Dorsolateral prefrontal cortex (tissue), 120 donors: ENCODE measurements at regions of chr21 and their contacts with region 1.

Region 1: GRCh38 chr21:42925114-42925907 is at the start of gene ERVH48-1:
- DNase-seq: peak in 1 of 10 donors; percentile 12
- H3K4me3 ChIP-seq: no peak within 1 kb of the TSS
- H3K27ac ChIP-seq: peak within 1 kb of the TSS in 9 of 59 donors; percentile 4 to 62 (median 31)
- H3K27me3 ChIP-seq: no peaks in the 10 kb centered on the region
- CTCF ChIP-seq: no peak
- total RNA-seq, gene ERVH48-1: not detected

Region 2: DNA sequence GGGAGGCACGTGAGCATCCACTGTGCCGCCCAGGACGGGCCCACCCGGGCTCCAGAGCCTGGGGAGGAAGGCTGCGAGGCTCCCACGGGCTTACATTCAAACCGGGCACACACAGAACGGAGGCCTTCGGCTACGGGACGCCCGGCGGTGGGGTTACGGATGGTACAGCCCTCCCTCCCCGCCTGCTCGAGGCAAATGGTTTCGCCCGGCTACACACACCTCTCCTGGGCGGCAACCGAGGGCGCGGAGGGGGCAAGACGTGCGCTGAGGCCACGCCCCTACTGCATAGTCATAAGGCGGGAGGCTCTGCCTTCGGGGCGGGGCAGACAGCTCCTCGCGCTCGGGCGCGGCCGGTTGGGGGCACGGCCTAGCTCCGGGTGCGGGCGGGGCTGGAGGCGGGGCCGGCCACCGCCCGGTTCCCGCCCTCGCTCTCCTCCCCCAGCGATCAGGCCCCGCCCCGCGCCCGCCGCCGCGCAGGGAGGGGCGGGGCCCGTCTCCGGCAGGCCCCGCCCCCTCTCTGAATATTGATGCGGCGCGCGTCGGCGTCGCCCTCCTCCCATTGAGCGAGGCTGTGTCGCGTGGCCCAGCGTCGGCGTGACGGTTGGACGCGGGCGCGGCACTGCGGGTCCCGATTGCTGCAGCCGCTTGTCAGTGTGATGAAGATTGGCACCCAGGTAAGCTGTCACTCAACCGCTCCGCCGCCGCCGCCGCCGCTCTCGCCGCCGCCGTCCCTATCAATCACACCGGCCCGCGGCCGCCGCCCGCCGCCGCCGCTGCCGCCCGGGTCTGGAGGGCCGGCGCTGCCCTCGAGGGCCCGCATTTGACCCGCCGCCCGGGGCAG is 48.9 kb after region 1 on chr21 and contains the start of gene PKNOX1:
- intact Hi-C with region 1: loop called in 1 of 2 experiments (anchors 5 kb)
- DNase-seq: peak; percentile 91 to 99 (median 98)
- H3K4me3 ChIP-seq: peak within 1 kb of the TSS; percentile 68 to 95 (median 81)
- H3K27ac ChIP-seq: peak within 1 kb of the TSS; percentile 83 to 100 (median 96)
- H3K27me3 ChIP-seq: no peaks in the 10 kb centered on the region
- CTCF ChIP-seq: peak in 7 of 56 donors; percentile 2 to 37 (median 11)
- total RNA-seq, gene PKNOX1: 12.3 to 50.7 (median 23.5) TPM